Mammary epithelial cell (primary cell): ENCODE measurements at regions of chr4 and their contacts with region 1.

Region 1: DNA sequence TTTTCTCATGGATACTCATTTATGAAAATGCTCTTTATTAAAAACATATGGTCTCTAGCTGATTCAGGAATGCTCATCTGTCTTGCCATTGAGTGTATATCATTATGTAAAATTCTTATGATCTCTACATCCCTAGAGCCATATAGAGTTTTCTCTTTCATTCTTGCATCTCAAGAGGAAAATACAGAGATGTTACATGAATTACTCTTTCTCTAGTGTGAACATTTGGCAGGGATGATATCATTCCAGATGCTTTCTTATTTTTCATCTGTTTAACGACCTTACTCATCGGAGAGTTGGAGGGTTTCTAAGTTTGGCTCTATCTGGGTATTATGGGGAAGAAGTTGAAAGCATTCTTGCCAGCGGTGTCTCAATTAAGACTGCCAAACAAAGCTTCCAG is 202.9 kb upstream of the SLC7A11 start:
- DNase-seq: no peak
- H3K4me3 ChIP-seq: no peak overlapping the region
- H3K27ac ChIP-seq: no peak overlapping the region
- H3K4me1 ChIP-seq: no peaks in the 10 kb centered on the region
- H3K27me3 ChIP-seq: no peaks in the 10 kb centered on the region
- CTCF ChIP-seq: no peak

Region 2: GRCh38 chr4:138420471-138420870 is 24.6 kb before region 1 on chr4:
- CTCF ChIA-PET with region 1: no interaction called
- dilution Hi-C with region 1: no loop called
- in situ Hi-C with region 1: no loop called
- intact Hi-C with region 1: loop called (anchors 1 kb)
- DNase-seq: no peak
- H3K4me3 ChIP-seq: no peak overlapping the region
- H3K27ac ChIP-seq: no peak overlapping the region
- H3K4me1 ChIP-seq: no peaks in the 10 kb centered on the region
- H3K27me3 ChIP-seq: no peaks in the 10 kb centered on the region
- CTCF ChIP-seq: no peak

Region 3: DNA sequence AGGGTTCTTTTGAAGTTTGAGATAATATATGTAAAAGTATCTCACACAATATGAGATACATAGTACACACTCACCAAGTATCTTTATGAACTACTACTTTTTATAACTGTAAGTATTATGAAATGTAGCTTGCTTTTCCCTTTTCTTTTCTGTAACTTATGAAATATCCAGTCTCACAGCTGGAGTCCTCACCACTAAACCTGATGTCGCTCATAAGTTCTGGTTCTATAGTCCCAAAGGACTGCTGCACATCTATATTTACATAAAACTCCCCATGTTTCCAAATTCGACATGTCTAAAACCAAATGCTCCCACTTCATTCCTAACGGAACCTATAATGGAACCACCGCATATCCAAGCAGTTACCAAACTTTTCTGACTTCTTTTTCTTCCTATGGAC is 16.5 kb before region 1 on chr4:
- CTCF ChIA-PET with region 1: interaction called, 16 read pairs
- dilution Hi-C with region 1: no loop called
- in situ Hi-C with region 1: no loop called
- intact Hi-C with region 1: no loop called
- DNase-seq: no peak
- H3K4me3 ChIP-seq: no peak overlapping the region
- H3K27ac ChIP-seq: no peak overlapping the region
- H3K4me1 ChIP-seq: no peaks in the 10 kb centered on the region
- H3K27me3 ChIP-seq: no peaks in the 10 kb centered on the region
- CTCF ChIP-seq: no peak

Region 4: GRCh38 chr4:139042981-139043460 is 597.9 kb after region 1 on chr4:
- CTCF ChIA-PET with region 1: no interaction called
- dilution Hi-C with region 1: no loop called
- in situ Hi-C with region 1: no loop called
- intact Hi-C with region 1: no loop called
- DNase-seq: no peak
- H3K4me3 ChIP-seq: no peak overlapping the region
- H3K27ac ChIP-seq: no peak overlapping the region
- H3K4me1 ChIP-seq: no peaks in the 10 kb centered on the region
- H3K27me3 ChIP-seq: no peaks in the 10 kb centered on the region
- CTCF ChIP-seq: no peak